CD4-positive, alpha-beta memory T cell (primary cell): ENCODE measurements at regions of chr19 and their contacts with region 1.

Region 1: GRCh38 chr19:18000935-18001778 is 6.8 kb upstream of the ARRDC2 start:
- DNase-seq: peak; percentile 96 to 98 (median 97)
- H3K4me3 ChIP-seq: peak overlapping the region; percentile 76 to 86
- H3K4me3 Mint-ChIP-seq: peak overlapping the region; percentile 88 to 96 (median 92)
- H3K27ac ChIP-seq: peak overlapping the region; percentile 88
- H3K27ac Mint-ChIP-seq: peak overlapping the region; percentile 93 to 100 (median 100)
- H3K4me1 ChIP-seq: peaks cover 33% of the 10 kb centered on the region
- H3K4me1 Mint-ChIP-seq: peaks cover 10 to 41% (median 24%) of the 10 kb centered on the region in 4 donors
- H3K27me3 ChIP-seq: no peaks in the 10 kb centered on the region
- H3K27me3 Mint-ChIP-seq: no peaks in the 10 kb centered on the region

Region 2: GRCh38 chr19:17873786-17874757 is 127.1 kb before region 1 on chr19:
- CTCF ChIA-PET with region 1: no interaction called
- POLR2A ChIA-PET with region 1: interaction called, 9 read pairs
- intact Hi-C with region 1: loop called (anchors 5 kb)
- DNase-seq: peak; percentile 62 to 71 (median 68)
- H3K4me3 ChIP-seq: peak overlapping the region in 1 of 2 donors; percentile 59
- H3K4me3 Mint-ChIP-seq: peak overlapping the region; percentile 75 to 87 (median 81)
- H3K27ac ChIP-seq: no peak overlapping the region
- H3K27ac Mint-ChIP-seq: peak overlapping the region; percentile 46 to 92 (median 83)
- H3K4me1 ChIP-seq: peaks cover 26% of the 10 kb centered on the region
- H3K4me1 Mint-ChIP-seq: peaks cover 3 to 26% (median 11%) of the 10 kb centered on the region in 4 donors
- H3K27me3 ChIP-seq: no peaks in the 10 kb centered on the region
- H3K27me3 Mint-ChIP-seq: no peaks in the 10 kb centered on the region

Region 3: GRCh38 chr19:17889609-17890214 is 111.4 kb before region 1 on chr19:
- CTCF ChIA-PET with region 1: no interaction called
- POLR2A ChIA-PET with region 1: no interaction called
- intact Hi-C with region 1: no loop called
- DNase-seq: no peak
- H3K4me3 ChIP-seq: no peak overlapping the region
- H3K4me3 Mint-ChIP-seq: no peak overlapping the region
- H3K27ac ChIP-seq: no peak overlapping the region
- H3K27ac Mint-ChIP-seq: no peak overlapping the region
- H3K4me1 ChIP-seq: no peaks in the 10 kb centered on the region
- H3K4me1 Mint-ChIP-seq: no peaks in the 10 kb centered on the region
- H3K27me3 ChIP-seq: no peaks in the 10 kb centered on the region
- H3K27me3 Mint-ChIP-seq: no peaks in the 10 kb centered on the region

Region 4: GRCh38 chr19:17938092-17938845 is 62.9 kb before region 1 on chr19:
- CTCF ChIA-PET with region 1: interaction called, 402 read pairs
- POLR2A ChIA-PET with region 1: interaction called, 38 read pairs
- intact Hi-C with region 1: loop called (anchors 1 kb)
- DNase-seq: peak; percentile 77 to 82 (median 80)
- H3K4me3 ChIP-seq: no peak overlapping the region
- H3K4me3 Mint-ChIP-seq: no peak overlapping the region
- H3K27ac ChIP-seq: no peak overlapping the region
- H3K27ac Mint-ChIP-seq: peak overlapping the region in 1 of 7 donors; percentile 52
- H3K4me1 ChIP-seq: peaks cover 7% of the 10 kb centered on the region
- H3K4me1 Mint-ChIP-seq: peaks cover 4 to 10% (median 7%) of the 10 kb centered on the region in 4 donors
- H3K27me3 ChIP-seq: no peaks in the 10 kb centered on the region
- H3K27me3 Mint-ChIP-seq: no peaks in the 10 kb centered on the region

Region 5: GRCh38 chr19:18013210-18014111 is 12.3 kb after region 1 on chr19:
- CTCF ChIA-PET with region 1: no interaction called
- POLR2A ChIA-PET with region 1: interaction called, 135 read pairs
- intact Hi-C with region 1: no loop called
- DNase-seq: no peak
- H3K4me3 ChIP-seq: no peak overlapping the region
- H3K4me3 Mint-ChIP-seq: peak overlapping the region in 7 of 8 donors; percentile 23 to 88 (median 81)
- H3K27ac ChIP-seq: peak overlapping the region; percentile 42
- H3K27ac Mint-ChIP-seq: peak overlapping the region; percentile 94 to 99 (median 97)
- H3K4me1 ChIP-seq: peaks cover 77% of the 10 kb centered on the region
- H3K4me1 Mint-ChIP-seq: peaks cover 31 to 68% (median 53%) of the 10 kb centered on the region in 4 donors
- H3K27me3 ChIP-seq: no peaks in the 10 kb centered on the region
- H3K27me3 Mint-ChIP-seq: no peaks in the 10 kb centered on the region

Region 6: GRCh38 chr19:18044825-18045304 is 43.7 kb after region 1 on chr19:
- CTCF ChIA-PET with region 1: interaction called, 27 read pairs
- POLR2A ChIA-PET with region 1: interaction called, 21 read pairs
- intact Hi-C with region 1: no loop called
- DNase-seq: peak; percentile 77 to 92 (median 79)
- H3K4me3 ChIP-seq: peak overlapping the region; percentile 7 to 8
- H3K4me3 Mint-ChIP-seq: peak overlapping the region; percentile 83 to 93 (median 89)
- H3K27ac ChIP-seq: peak overlapping the region; percentile 61
- H3K27ac Mint-ChIP-seq: peak overlapping the region; percentile 92 to 99 (median 97)
- H3K4me1 ChIP-seq: peaks cover 29% of the 10 kb centered on the region
- H3K4me1 Mint-ChIP-seq: peaks cover 21 to 50% (median 34%) of the 10 kb centered on the region in 4 donors
- H3K27me3 ChIP-seq: no peaks in the 10 kb centered on the region
- H3K27me3 Mint-ChIP-seq: no peaks in the 10 kb centered on the region

Region 7: DNA sequence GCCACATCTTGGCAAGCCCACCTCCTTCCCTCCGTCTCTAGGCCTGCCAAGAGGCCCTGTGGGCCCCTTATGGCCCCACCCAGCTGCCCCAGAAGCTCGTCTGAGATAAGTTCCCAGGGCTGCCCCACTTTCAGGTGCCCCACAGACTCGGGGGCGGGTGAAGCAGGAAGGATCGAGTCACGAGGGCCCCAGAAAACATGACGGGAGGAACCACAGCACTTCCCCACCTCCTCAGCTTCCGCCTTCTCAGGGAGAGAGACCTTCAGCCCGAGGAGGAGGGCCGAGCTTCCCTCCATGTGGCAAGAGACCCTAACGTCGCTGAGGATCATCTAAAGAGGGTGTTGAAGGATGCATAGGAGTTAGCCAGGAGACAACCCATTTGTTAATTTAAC is 90.1 kb after region 1 on chr19:
- CTCF ChIA-PET with region 1: no interaction called
- POLR2A ChIA-PET with region 1: interaction called, 13 read pairs
- intact Hi-C with region 1: no loop called
- DNase-seq: peak; percentile 81 to 91 (median 83)
- H3K4me3 ChIP-seq: peak overlapping the region in 1 of 2 donors; percentile 16
- H3K4me3 Mint-ChIP-seq: peak overlapping the region in 7 of 8 donors; percentile 68 to 83 (median 75)
- H3K27ac ChIP-seq: peak overlapping the region; percentile 85
- H3K27ac Mint-ChIP-seq: peak overlapping the region; percentile 98 to 100 (median 99)
- H3K4me1 ChIP-seq: peaks cover 68% of the 10 kb centered on the region
- H3K4me1 Mint-ChIP-seq: peaks cover 39 to 76% (median 55%) of the 10 kb centered on the region in 4 donors
- H3K27me3 ChIP-seq: no peaks in the 10 kb centered on the region
- H3K27me3 Mint-ChIP-seq: no peaks in the 10 kb centered on the region

Region 8: DNA sequence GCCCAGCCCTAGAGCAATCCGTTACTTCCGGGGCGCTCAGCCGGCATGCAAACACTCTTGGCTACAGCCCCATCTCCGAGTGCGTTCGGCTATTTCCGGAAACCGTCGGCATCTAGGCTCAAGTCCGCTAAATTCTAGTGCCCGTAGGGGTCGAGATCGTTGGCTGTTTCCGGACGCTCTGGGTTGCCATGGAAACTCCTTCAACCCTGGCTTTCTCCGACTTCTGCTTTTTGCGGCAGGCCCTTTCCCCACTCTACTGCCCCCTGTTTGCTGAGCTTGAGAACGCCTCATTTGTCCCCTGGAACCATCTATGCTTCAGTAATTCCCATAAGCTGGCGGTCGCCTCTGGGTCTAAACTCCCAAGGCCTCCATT is 151.3 kb after region 1 on chr19:
- CTCF ChIA-PET with region 1: no interaction called
- POLR2A ChIA-PET with region 1: interaction called, 12 read pairs
- intact Hi-C with region 1: loop called (anchors 2 kb)
- DNase-seq: peak; percentile 96 to 99 (median 96)
- H3K4me3 ChIP-seq: peak overlapping the region; percentile 74 to 79
- H3K4me3 Mint-ChIP-seq: peak overlapping the region; percentile 84 to 95 (median 91)
- H3K27ac ChIP-seq: peak overlapping the region; percentile 74
- H3K27ac Mint-ChIP-seq: peak overlapping the region; percentile 88 to 99 (median 97)
- H3K4me1 ChIP-seq: peaks cover 28% of the 10 kb centered on the region
- H3K4me1 Mint-ChIP-seq: peaks cover 14 to 38% (median 21%) of the 10 kb centered on the region in 4 donors
- H3K27me3 ChIP-seq: no peaks in the 10 kb centered on the region
- H3K27me3 Mint-ChIP-seq: no peaks in the 10 kb centered on the region